Activated CD4-positive, alpha-beta memory T cell treated with anti-CD3 and anti-CD28 coated beads for 36 hours (primary cell): ENCODE measurements at regions of chr7 and their contacts with region 1.

Region 1: DNA sequence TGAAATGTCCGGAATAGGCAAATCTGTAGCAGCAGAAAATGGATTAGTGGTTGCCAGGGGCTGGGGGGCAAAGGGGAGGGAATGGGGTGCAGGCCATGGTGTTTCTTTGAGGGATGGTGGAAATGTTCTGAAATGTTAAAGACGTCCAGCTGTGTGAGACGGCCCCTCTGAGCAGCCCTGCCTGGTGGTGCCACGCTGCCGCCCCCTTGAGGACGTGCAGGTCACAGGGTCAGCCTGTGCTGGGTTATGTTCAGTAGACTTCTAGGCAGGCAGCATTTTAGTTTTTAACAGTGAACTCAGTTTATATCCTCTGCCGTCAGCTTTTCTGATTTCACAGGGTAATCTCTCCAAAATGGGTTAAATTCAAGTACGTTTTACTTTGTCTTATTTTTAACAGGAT is 9.4 kb downstream of the NUB1 start:
- DNase-seq: peak; percentile 68
- H3K4me3 Mint-ChIP-seq: peak overlapping the region; percentile 46
- H3K27ac Mint-ChIP-seq: peak overlapping the region; percentile 95
- H3K4me1 Mint-ChIP-seq: peaks cover 35% of the 10 kb centered on the region
- H3K27me3 Mint-ChIP-seq: no peaks in the 10 kb centered on the region

Region 2: GRCh38 chr7:151080522-151081169 is 270.4 kb before region 1 on chr7 and contains the start of gene FASTK:
- CTCF ChIA-PET with region 1: no interaction called
- POLR2A ChIA-PET with region 1: no interaction called
- intact Hi-C with region 1: loop called (anchors 2 kb)
- DNase-seq: peak; percentile 93
- H3K4me3 Mint-ChIP-seq: peak within 1 kb of the TSS; percentile 98
- H3K27ac Mint-ChIP-seq: peak within 1 kb of the TSS; percentile 86
- H3K4me1 Mint-ChIP-seq: peaks cover 35% of the 10 kb centered on the region
- H3K27me3 Mint-ChIP-seq: peaks cover 5% of the 10 kb centered on the region
- total RNA-seq, gene FASTK: 56.8 to 57.4 TPM

Region 3: DNA sequence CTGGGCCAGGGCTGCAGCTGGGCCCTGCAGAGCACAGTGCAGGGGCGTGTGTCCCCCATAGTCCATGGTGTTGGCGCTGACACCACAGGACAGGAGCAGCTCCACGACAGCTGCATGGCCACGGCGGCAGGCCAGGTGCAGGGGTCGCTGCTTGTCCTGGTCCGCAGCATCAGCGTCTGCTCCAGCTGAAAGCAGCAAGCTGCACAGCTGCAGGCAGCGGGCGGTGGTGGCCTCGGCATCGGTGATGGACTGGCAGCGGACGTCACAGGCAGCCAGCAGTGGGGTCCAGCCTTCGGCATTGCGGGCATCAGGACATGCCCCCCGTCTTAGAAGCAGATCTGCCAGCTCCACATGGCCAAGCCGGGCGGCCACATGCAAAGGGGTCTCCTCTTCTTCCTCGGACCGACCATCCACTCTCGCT is 170.0 kb before region 1 on chr7:
- CTCF ChIA-PET with region 1: no interaction called
- POLR2A ChIA-PET with region 1: no interaction called
- intact Hi-C with region 1: no loop called
- DNase-seq: peak; percentile 3
- H3K4me3 Mint-ChIP-seq: no peak overlapping the region
- H3K27ac Mint-ChIP-seq: no peak overlapping the region
- H3K4me1 Mint-ChIP-seq: no peaks in the 10 kb centered on the region
- H3K27me3 Mint-ChIP-seq: peaks cover 8% of the 10 kb centered on the region

Region 4: DNA sequence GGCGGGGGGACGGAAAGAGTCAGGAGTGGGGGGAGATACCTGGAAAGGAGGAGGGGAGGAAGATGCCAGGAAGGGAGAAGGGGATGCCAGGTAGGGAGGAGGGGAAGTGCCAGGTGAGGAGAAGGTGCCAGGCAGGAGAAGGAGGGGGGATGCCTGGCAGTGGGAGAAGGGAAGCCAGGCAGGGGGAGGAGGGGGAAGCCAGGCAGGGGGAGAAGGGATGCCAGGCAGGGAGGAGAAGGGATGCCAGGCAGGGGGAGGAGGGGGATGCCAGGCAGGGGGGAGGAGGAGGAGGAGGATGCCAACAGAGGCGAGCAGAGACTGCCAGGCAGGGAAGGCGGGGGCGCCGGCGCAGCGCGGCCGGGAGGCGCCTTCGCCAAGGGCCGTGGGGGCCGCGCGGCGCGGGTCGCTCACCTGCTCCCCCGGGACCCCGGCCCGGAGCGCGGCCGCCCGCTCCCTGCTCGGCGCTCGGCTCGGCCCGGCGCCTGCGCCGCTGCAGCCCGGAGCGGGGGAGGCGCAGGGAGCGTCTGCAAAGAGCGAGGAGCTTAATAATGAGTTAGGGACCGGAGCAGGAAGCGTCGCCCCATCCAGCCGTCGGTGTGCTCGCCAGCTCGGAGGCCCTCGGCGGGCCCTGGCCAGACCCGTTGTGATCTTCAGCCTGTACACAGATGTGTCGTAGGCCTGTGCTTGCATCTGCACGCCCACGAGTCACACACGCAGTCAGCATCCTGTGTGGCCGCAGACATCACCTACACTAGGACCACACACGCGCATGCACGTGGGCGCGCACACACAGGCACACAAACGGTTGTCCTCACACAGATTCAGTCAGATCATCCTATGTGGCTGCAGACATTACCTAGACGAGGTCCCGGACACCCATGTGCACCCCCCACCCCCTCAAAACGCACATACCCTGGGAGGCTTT is 74.1 kb before region 1 on chr7:
- CTCF ChIA-PET with region 1: no interaction called
- POLR2A ChIA-PET with region 1: no interaction called
- intact Hi-C with region 1: loop called (anchors 2 kb)
- DNase-seq: peak; percentile 75
- H3K4me3 Mint-ChIP-seq: peak overlapping the region; percentile 70
- H3K27ac Mint-ChIP-seq: peak overlapping the region; percentile 51
- H3K4me1 Mint-ChIP-seq: peaks cover 19% of the 10 kb centered on the region
- H3K27me3 Mint-ChIP-seq: peaks cover 2% of the 10 kb centered on the region

Region 5: GRCh38 chr7:151368136-151368571 is 17.1 kb after region 1 on chr7:
- CTCF ChIA-PET with region 1: interaction called, 37 read pairs
- POLR2A ChIA-PET with region 1: no interaction called
- intact Hi-C with region 1: loop called (anchors 1 kb)
- DNase-seq: peak; percentile 87
- H3K4me3 Mint-ChIP-seq: no peak overlapping the region
- H3K27ac Mint-ChIP-seq: no peak overlapping the region
- H3K4me1 Mint-ChIP-seq: peaks cover 5% of the 10 kb centered on the region
- H3K27me3 Mint-ChIP-seq: no peaks in the 10 kb centered on the region

Region 6: DNA sequence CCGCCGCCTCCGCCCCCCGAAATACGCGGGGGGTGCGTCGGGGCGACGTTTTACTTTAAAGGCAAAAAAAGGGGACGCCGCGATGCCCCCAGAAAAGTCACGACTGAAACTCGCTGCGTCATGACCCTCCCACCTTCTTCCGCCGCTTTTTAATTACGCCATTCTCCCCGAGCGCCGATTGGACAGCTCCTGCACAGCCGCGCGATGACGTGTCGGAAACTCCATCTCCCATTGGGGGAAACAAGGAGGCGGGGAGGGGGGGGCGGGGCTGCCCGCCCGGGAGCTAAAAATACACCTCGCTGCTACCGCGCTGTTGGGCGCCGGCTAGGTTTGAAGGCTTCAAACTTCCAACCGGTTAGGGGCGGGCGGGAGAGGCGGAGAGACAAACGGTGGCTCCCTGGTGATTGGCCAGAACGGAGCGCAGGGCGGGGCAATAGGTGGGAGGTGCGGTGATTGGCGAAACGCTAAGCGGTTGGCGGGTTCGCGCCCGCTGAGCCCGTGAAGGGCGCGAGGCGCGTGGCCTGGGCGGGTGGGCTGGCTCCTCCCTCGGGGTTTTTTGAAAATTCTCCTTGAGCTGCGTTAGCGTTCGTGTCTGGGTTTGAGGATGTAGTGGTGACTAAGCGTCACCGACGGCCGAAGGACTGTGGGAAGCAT is 168.9 kb after region 1 on chr7 and contains the start of gene RHEB:
- CTCF ChIA-PET with region 1: interaction called, 3 read pairs
- POLR2A ChIA-PET with region 1: no interaction called
- intact Hi-C with region 1: loop called (anchors 1 kb)
- DNase-seq: peak; percentile 99
- H3K4me3 Mint-ChIP-seq: peak within 1 kb of the TSS; percentile 92
- H3K27ac Mint-ChIP-seq: peak within 1 kb of the TSS; percentile 96
- H3K4me1 Mint-ChIP-seq: peaks cover 35% of the 10 kb centered on the region
- H3K27me3 Mint-ChIP-seq: no peaks in the 10 kb centered on the region
- total RNA-seq, gene RHEB: 62.0 to 64.6 TPM